Dendritic cell treated with granulocyte-macrophage colony-stimulating factor and Interleukin-4, amounts not matched to agents 40 ng/mL and 50 ng/mL, for 4 days (primary cell): ENCODE measurements at regions of chr1 and their contacts with region 1.

Region 1: DNA sequence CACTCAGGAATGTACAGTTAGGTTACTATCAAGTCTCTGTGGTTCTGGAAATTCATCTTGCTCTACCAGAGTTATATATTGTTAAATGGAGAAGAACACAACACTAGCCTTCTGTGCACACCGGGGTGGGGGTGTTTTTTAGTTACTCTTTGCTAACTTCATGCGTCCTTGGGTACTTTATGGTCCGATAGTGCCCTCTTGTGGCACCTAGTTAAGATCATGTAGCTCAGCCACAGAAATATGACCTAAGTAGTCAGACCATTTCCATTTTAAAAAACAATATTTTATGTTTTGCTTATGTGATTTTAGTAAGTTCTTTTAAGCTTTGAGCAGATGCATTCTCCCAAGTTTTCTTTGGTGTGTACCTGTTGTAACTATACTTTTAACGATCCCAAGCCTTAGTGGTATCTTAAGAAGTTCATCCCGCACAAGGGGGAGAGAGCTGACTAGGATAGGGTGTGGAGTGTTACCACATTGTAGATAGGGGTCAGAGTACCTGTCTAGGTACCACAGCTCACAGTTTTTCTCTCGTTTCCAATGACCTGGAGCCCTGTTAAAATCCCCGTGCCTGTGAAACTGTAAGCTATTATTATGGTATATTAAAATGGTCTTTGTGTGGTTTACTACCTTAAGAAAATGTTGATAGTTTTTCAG is 20.6 kb upstream of the SH3D21 start:
- H3K4me3 Mint-ChIP-seq: no peak overlapping the region
- H3K27ac Mint-ChIP-seq: no peak overlapping the region
- H3K4me1 Mint-ChIP-seq: no peaks in the 10 kb centered on the region
- H3K27me3 Mint-ChIP-seq: no peaks in the 10 kb centered on the region

Region 2: DNA sequence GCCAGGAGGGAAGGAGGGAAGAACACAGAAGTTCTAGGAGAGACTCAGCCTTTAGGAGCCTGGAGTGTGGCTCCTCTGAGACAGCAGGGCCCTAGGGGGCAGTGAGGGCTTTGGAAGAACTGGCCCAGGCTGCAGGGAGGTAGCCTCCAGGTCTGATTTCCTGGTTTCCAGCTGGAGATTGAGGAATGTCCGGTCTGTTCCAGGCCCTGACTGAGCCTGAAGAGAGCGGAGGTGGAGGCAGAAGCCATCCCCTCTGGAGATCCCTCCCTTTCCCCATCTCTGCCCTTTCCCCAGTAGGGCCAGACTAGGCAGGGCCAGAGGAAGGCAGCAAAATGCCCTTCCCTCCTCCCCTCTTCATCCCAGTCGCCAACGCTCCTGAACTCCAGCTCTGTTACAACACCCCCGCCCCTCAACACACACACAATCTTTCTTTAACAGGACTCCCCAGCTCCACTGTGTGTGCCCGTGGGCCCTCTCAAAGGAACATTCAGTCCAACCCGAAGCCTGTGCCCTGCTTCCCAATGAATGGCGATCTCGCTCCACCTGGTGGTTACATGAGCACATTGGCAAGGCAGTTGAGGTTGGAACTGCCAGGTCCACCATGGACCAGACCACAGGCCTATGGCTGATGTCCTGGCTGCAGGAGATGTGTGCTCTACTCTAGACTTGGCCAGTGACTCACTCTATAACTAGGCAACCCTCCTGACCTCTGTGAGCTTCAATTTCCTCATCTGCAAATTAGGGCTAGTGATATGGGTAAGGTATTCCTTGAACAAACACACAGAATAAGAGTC is 97.6 kb before region 1 on chr1:
- intact Hi-C with region 1: loop called (anchors 1 kb)
- H3K4me3 Mint-ChIP-seq: no peak overlapping the region
- H3K27ac Mint-ChIP-seq: peak overlapping the region; percentile 83
- H3K4me1 Mint-ChIP-seq: peaks cover 17% of the 10 kb centered on the region
- H3K27me3 Mint-ChIP-seq: no peaks in the 10 kb centered on the region